Adrenal gland (tissue), 19 donors: ENCODE measurements at regions of chr1 and their contacts with region 1.

Region 1: GRCh38 chr1:108125312-108126138 is 74.6 kb downstream of the SLC25A24 start:
- DNase-seq: peak; percentile 70 to 88 (median 72)
- H3K4me3 ChIP-seq: no peak overlapping the region
- H3K27ac ChIP-seq: no peak overlapping the region
- H3K4me1 ChIP-seq: peaks cover 0 to 4% of the 10 kb centered on the region in 2 donors
- H3K27me3 ChIP-seq: no peaks in the 10 kb centered on the region
- CTCF ChIP-seq: peak; percentile 87 to 98 (median 94)
- POLR2A ChIP-seq: no peak

Region 2: DNA sequence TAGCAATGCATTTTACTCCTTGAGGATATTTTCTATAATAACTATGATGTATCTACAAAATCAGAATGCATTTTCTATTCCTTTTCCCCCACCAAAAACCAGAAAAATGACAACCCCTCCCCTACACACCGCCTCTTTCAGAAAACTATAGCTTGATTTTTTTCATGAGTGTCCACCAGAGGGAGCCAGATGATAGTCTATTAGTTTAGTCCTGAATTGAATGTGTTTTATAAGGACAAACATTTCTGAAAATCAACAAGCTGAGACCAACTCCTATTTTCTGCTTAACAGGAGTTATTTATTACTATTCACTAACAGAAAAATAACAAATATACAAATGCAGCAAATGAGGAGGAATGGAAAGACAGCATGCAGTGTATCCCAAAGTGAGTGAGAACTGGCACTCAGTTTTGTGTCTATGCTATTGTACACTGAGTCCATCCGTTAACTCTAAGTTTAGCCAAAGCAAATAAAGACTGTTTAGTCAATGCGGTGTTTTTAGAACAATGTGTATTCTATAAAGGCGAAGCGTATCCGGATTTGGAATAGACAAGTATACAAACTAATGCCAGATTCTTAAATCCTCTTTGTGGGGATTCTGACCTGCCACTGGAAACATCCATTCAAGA is 343.2 kb before region 1 on chr1:
- intact Hi-C with region 1: loop called (anchors 2 kb)
- DNase-seq: peak in 5 of 7 donors; percentile 29 to 63 (median 48)
- H3K4me3 ChIP-seq: no peak overlapping the region
- H3K27ac ChIP-seq: no peak overlapping the region
- H3K4me1 ChIP-seq: no peaks in the 10 kb centered on the region
- H3K27me3 ChIP-seq: no peaks in the 10 kb centered on the region
- CTCF ChIP-seq: peak; percentile 49 to 93 (median 78)
- POLR2A ChIP-seq: no peak

Region 3: DNA sequence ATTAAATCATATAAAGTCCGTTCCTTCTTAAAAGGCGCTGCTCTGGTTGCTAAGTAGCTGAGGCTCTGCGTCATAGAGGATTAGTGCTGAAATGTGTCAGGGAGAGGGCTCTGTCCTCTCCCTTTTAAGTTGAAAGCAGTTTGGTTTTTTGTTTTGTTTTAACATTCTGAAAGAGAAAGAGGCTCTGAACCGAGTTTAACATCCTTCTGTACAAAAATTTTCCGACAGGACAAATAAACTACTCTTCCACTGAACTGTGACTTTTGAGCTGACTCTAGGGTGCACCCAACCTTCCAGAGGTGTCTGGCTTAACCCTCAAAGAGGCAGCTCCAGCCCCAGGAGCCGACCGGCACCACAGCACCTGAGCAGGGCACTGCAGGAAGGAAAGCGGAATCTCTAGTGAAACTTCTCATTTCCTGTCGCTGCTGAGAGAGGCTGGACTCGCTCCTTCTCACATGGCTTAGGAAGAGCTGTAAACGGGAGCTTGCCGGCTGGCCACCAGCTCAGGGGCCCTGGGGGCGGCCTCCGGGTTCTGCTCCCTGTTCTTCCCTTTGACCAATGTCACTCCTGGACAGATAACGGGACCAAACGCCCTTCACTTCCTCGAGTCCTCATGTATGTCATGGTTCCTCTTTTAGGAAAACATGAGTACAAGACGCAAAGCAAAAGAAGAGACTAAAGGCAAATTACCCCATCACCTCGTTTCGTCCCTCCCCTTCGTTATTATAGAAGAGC is 161.8 kb before region 1 on chr1:
- intact Hi-C with region 1: loop called in 1 of 2 experiments (anchors 5 kb)
- DNase-seq: peak in 4 of 7 donors; percentile 14 to 55 (median 24)
- H3K4me3 ChIP-seq: peak overlapping the region in 3 of 4 donors; percentile 21 to 80 (median 79)
- H3K27ac ChIP-seq: peak overlapping the region in 4 of 5 donors; percentile 45 to 81 (median 66)
- H3K4me1 ChIP-seq: no peaks in the 10 kb centered on the region
- H3K27me3 ChIP-seq: peaks cover 5% of the 10 kb centered on the region
- CTCF ChIP-seq: no peak
- POLR2A ChIP-seq: peak in 1 of 2 donors; percentile 7